Colonic mucosa (tissue), 4 donors: ENCODE measurements at regions of chr7 and their contacts with region 1.

Region 1: DNA sequence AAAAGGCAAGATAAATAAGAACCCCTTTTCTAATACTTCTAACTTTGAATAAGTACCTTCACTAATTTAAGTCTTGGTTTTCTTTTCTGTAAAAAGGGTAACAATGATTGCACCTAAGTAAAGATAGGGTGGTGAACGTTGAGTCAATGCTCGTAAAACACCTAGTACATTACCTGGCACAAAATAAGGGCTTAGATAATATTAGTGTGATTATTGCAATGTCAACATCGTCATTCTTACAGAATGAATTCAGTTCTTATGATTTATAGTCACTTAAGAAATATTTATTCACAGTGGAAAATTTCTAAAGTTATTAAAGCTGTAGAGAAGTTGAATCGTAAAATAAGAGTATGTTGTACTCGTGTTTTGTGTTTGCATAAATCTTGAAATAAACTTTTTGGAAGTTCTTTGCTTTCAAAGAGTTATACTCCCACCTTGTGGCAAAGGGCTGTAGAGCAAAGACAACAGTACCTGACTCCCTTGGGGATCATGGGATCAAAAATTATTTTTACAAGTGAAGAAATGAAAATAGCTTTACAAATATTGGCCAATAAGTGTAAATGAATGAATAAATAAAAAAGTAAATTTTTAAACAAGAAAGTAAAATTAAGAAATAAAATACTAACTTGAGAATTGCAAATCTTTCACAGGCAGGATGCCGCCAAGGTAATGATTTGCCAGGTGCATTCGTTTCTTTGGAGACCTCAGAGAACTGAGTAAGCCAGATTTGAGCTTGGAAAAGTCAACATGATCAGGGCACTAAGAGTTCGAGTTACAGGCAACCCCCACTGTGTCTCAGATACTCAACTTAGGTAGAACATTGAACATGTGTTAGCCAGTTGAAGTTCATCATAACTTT is 285.8 kb upstream of the CACNA2D1 start:
- DNase-seq: no peak
- H3K4me3 ChIP-seq: no peak overlapping the region
- H3K27ac ChIP-seq: no peak overlapping the region
- H3K4me1 ChIP-seq: no peaks in the 10 kb centered on the region
- H3K27me3 ChIP-seq: no peaks in the 10 kb centered on the region
- CTCF ChIP-seq: peak; percentile 49

Region 2: GRCh38 chr7:82044497-82045080 is 684.8 kb before region 1 on chr7:
- intact Hi-C with region 1: loop called (anchors 5 kb)
- DNase-seq: peak; percentile 40
- H3K4me3 ChIP-seq: no peak overlapping the region
- H3K27ac ChIP-seq: no peak overlapping the region
- H3K4me1 ChIP-seq: no peaks in the 10 kb centered on the region
- H3K27me3 ChIP-seq: no peaks in the 10 kb centered on the region
- CTCF ChIP-seq: peak; percentile 52

Region 3: GRCh38 chr7:82234457-82235049 is 494.8 kb before region 1 on chr7:
- intact Hi-C with region 1: loop called (anchors 10 kb)
- DNase-seq: no peak
- H3K4me3 ChIP-seq: no peak overlapping the region
- H3K27ac ChIP-seq: no peak overlapping the region
- H3K4me1 ChIP-seq: no peaks in the 10 kb centered on the region
- H3K27me3 ChIP-seq: no peaks in the 10 kb centered on the region
- CTCF ChIP-seq: peak; percentile 31

Region 4: DNA sequence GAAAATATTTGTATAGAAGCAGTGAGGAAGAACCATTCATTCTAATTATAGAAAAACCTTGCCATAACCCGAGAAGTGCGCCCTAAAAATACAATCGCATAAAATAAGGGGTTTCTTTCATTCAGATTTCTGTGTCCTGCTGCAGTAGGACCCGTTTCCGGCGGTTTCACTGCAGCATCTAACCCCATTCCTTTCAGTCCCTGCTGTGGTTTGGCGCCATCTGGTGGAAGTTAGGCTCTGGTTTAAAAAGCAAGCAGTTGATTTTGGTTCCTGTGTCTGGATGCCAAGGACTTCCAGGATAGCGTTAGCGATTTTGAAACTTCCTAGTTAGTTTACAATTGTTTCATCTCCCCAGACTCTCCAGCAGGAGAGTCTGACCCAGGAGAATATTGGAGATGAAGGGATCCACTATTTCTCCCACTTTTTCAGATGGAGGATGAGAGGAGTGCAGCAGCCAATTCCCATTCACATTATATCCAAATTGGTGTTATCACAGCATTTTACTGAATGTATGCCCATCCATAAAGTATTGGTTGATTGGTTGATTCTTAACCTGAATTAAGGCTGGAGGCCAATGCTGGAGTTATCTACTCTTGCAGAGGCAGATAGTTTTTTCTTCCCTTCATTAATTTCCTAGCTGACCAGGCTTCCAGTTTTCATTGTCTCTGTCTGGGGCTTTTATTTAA is 157.1 kb before region 1 on chr7:
- intact Hi-C with region 1: loop called (anchors 10 kb)
- DNase-seq: peak; percentile 87
- H3K4me3 ChIP-seq: no peak overlapping the region
- H3K27ac ChIP-seq: no peak overlapping the region
- H3K4me1 ChIP-seq: no peaks in the 10 kb centered on the region
- H3K27me3 ChIP-seq: no peaks in the 10 kb centered on the region
- CTCF ChIP-seq: peak; percentile 86

Region 5: DNA sequence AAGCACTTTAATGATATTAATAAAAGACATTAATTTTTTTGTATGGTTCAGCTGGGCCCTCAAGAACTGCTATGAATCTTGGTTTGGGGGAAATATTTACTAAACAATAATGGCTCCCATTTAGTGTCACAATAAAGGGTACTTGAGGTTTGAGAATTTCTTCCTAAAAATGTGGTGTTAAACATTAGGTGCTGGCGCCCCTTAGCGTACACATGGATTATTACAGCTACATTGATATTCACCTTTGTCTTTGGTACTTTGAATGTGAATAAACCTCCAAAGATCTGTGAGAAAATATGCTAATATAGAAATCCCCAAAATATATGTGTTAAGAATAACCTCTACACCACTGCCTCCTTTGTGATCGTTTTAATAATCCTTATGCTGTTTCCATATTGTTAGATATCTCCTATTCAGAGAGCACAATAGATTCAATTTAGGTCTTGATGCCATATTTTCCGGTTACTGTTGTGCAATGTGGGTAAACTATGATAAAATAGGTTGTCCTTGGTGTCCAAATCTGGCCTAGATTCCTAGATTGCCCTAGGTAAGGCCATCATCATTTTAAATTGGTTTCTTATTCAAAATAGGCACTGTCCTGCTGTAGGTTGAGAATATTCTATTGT is 124.0 kb before region 1 on chr7:
- intact Hi-C with region 1: loop called (anchors 10 kb)
- DNase-seq: no peak
- H3K4me3 ChIP-seq: no peak overlapping the region
- H3K27ac ChIP-seq: no peak overlapping the region
- H3K4me1 ChIP-seq: no peaks in the 10 kb centered on the region
- H3K27me3 ChIP-seq: no peaks in the 10 kb centered on the region
- CTCF ChIP-seq: peak; percentile 59